WTC11 (cell line): ENCODE measurements at regions of chr3 and their contacts with region 1.

Region 1: GRCh38 chr3:98602078-98602678 is 8.8 kb upstream of the CPOX start:
- DNase-seq: no peak
- ATAC-seq: peak; percentile 91
- H3K4me3 Mint-ChIP-seq: no peak overlapping the region
- H3K27ac Mint-ChIP-seq: no peak overlapping the region
- H3K4me1 Mint-ChIP-seq: no peaks in the 10 kb centered on the region
- H3K27me3 Mint-ChIP-seq: no peaks in the 10 kb centered on the region; the same call in 1 of the 2 replicates
- CTCF ChIP-seq: peak; percentile 43; the same call in 1 of the 2 replicates

Region 2: DNA sequence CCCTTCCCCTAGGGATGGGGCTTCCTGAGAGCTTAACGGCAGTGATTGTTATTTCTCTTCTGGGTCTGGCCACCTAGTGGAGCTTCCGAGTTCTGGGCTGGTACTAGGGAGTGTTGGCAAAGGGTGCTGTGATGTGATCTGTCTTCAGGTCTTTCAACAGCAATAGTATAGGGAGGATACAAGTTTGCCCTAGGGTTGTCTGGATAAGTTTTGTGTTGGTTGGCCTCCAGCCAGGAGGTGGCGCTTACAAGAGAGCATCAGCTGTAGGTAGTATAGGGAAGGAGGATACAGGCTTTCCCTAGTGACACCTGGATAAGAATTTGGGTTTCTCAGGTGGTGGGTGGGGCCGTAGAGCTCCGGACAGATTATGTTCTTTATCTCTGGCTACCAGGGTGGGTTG is 10.4 kb after region 1 on chr3:
- CTCF ChIA-PET with region 1: interaction called, 17 read pairs
- POLR2A ChIA-PET with region 1: no interaction called
- DNase-seq: peak; percentile 56
- ATAC-seq: peak; percentile 97
- H3K4me3 Mint-ChIP-seq: no peak overlapping the region
- H3K27ac Mint-ChIP-seq: no peak overlapping the region
- H3K4me1 Mint-ChIP-seq: 0 out of 2 replicates have a peak, but pooled peaks cover 8% of the 10 kb centered on the region
- H3K27me3 Mint-ChIP-seq: no peaks in the 10 kb centered on the region
- CTCF ChIP-seq: peak; percentile 30; the same call in 1 of the 2 replicates

Region 3: GRCh38 chr3:98793971-98794370 is 191.8 kb after region 1 on chr3:
- CTCF ChIA-PET with region 1: interaction called, 12 read pairs
- POLR2A ChIA-PET with region 1: no interaction called
- DNase-seq: no peak
- ATAC-seq: no peak
- H3K4me3 Mint-ChIP-seq: no peak overlapping the region
- H3K27ac Mint-ChIP-seq: no peak overlapping the region
- H3K4me1 Mint-ChIP-seq: peaks cover 4% of the 10 kb centered on the region; the same call in 1 of the 2 replicates
- H3K27me3 Mint-ChIP-seq: no peaks in the 10 kb centered on the region
- CTCF ChIP-seq: no peak

Region 4: GRCh38 chr3:98817547-98818041 is 215.4 kb after region 1 on chr3:
- CTCF ChIA-PET with region 1: interaction called, 27 read pairs
- POLR2A ChIA-PET with region 1: no interaction called
- DNase-seq: no peak
- ATAC-seq: peak; percentile 77
- H3K4me3 Mint-ChIP-seq: no peak overlapping the region
- H3K27ac Mint-ChIP-seq: no peak overlapping the region; the same call in 1 of the 2 replicates
- H3K4me1 Mint-ChIP-seq: peaks cover 14% of the 10 kb centered on the region
- H3K27me3 Mint-ChIP-seq: no peaks in the 10 kb centered on the region
- CTCF ChIP-seq: peak; percentile 70